SK-N-SH (cell line): ENCODE measurements at regions of chr5 and their contacts with region 1.

Region 1: GRCh38 chr5:139574641-139575312 is 13.6 kb downstream of the UBE2D2 start:
- DNase-seq: peak; percentile 43
- H3K4me3 ChIP-seq: no peak overlapping the region
- H3K27ac ChIP-seq: peak overlapping the region in 1 of 2 experiments; percentile 18; a peak in 1 of 4 replicates
- H3K4me1 ChIP-seq: no peaks in the 10 kb centered on the region; a peak in 2 of 4 replicates
- H3K27me3 ChIP-seq: no peaks in the 10 kb centered on the region
- CTCF ChIP-seq: peak; percentile 80
- EP300 ChIP-seq: no peak
- RAD21 ChIP-seq: peak; percentile 67

Region 2: DNA sequence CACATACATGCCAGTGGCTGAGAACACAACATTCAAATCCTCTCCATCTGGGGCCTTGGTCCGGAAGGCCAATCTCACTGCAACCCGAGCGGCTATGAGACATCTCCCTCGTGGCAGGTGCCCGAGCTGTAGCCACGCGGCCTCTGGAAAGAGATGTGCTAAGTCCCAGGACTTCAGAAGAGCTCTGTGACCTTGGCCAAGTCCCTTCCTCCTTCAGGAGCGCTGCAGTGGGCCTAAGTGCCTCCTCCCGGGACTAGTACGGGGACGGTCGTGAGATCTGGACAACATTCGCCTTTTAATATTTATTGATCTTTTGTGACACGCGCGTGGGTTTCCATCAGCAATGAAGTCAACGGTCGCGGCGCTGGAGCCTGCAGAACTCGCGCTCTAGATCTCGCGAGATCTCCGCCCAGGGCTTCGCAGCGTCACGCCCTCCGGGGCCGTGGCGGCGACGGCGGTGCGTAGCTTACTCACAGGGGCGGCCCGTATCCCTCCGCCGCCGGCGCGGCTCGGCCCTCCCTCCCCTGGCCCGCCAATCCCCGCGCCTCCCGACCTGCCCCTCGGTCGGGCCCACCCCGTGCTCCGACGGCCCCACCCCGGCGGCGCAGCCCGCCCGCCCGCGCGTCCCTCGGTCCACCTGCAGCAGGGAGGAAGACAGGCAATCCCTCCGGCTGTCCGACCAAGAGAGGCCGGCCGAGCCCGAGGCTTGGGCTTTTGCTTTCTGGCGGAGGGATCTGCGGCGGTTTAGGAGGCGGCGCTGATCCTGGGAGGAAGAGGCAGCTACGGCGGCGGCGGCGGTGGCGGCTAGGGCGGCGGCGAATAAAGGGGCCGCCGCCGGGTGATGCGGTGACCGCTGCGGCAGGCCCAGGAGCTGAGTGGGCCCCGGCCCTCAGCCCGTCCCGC is 13.8 kb before region 1 on chr5 and contains the start of gene UBE2D2:
- CTCF ChIA-PET with region 1: interaction called, 48 read pairs
- POLR2A ChIA-PET with region 1: interaction called, 3 read pairs
- DNase-seq: peak; percentile 99
- H3K4me3 ChIP-seq: peak within 1 kb of the TSS; percentile 69 to 73
- H3K27ac ChIP-seq: peak within 1 kb of the TSS; percentile 87 to 88
- H3K4me1 ChIP-seq: peaks cover 11 to 20% of the 10 kb centered on the region in 2 experiments; a peak in 3 of 4 replicates
- H3K27me3 ChIP-seq: no peaks in the 10 kb centered on the region
- CTCF ChIP-seq: no peak
- EP300 ChIP-seq: 0 out of 4 replicates have a peak, but pooled peaks of 1 of the 2 experiments have one; percentile 9
- RAD21 ChIP-seq: no peak
- polyA plus RNA-seq, gene UBE2D2: 22.8 and 24.5 TPM in 2 replicates

Region 3: GRCh38 chr5:139588962-139589361 is 14.2 kb after region 1 on chr5:
- CTCF ChIA-PET with region 1: interaction called, 24 read pairs
- POLR2A ChIA-PET with region 1: interaction called, 3 read pairs
- DNase-seq: no peak
- H3K4me3 ChIP-seq: no peak overlapping the region
- H3K27ac ChIP-seq: no peak overlapping the region
- H3K4me1 ChIP-seq: no peaks in the 10 kb centered on the region
- H3K27me3 ChIP-seq: no peaks in the 10 kb centered on the region
- CTCF ChIP-seq: no peak
- EP300 ChIP-seq: no peak
- RAD21 ChIP-seq: no peak